ENCODE measurements at regions of chr5 and their contacts with region 1.

Region 1: GRCh38 chr5:149268928-149269557 is 2.6 kb upstream of the AFAP1L1 start:
- DNase-seq: no peak
- ATAC-seq: 0 out of 2 replicates have a peak, but pooled peaks have one; percentile 4
- H3K4me3 Mint-ChIP-seq: no peak overlapping the region
- H3K27ac Mint-ChIP-seq: no peak overlapping the region
- H3K4me1 Mint-ChIP-seq: peaks cover 33% of the 10 kb centered on the region
- H3K27me3 Mint-ChIP-seq: peaks cover 51% of the 10 kb centered on the region
- CTCF ChIP-seq: peak; percentile 85

Region 2: DNA sequence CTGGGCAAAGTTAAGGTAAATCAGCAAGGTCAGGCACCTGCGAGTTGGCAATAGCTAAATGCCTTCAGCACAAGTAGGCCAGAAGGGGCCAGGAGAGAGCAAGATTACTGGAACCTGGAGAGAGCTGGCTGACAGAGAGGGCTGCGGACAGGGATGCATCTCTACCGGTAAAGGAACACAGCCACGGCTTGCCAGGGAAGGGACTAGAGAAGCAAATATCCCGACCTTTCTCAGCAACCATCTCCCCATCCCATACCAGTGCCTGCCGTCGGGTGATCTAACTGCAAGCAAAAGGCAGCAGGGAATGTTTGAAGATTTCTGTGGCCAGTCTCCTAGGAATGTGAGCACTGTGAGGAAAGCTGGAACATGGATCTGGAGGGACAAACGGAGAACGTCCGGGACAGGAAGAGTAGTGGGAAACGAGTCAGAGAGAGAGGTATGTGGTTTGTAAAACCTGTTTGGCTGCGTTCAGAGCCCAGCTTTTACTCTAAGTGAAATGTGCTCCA is 143.6 kb before region 1 on chr5:
- CTCF ChIA-PET with region 1: interaction called, 27 read pairs
- POLR2A ChIA-PET with region 1: no interaction called
- DNase-seq: peak; percentile 65
- ATAC-seq: peak; percentile 95
- H3K4me3 Mint-ChIP-seq: no peak overlapping the region
- H3K27ac Mint-ChIP-seq: no peak overlapping the region
- H3K4me1 Mint-ChIP-seq: peaks cover 23% of the 10 kb centered on the region
- H3K27me3 Mint-ChIP-seq: no peaks in the 10 kb centered on the region
- CTCF ChIP-seq: no peak

Region 3: DNA sequence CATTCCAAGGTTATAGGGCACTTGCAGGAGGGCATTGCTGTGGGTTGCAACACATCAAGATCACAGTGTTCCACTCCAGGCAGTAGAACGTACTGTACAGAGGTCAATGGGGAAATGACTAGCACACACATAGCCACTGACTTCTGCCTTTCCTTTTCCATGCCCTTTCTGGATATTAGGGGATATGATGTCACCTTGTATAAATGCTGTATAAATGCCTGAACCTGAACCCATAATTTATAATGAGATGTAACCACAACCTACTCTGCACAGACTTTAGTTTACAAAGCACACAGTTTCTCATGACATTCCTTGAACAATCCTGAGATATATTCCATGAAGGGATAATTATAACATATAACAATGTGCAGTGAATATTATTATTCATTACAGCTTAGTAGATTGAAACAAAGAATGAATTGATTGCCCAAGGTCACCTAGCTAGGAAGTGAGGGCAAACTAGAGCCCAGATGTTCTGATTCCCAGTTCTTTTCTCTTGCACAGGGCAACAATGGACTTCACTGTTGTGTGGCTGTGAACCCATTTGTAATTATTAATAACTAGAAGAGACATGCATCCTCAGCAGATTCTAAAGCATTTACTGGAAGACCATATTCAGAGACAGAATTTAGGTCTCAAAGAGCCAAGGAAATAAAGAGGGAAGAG is 133.4 kb before region 1 on chr5:
- CTCF ChIA-PET with region 1: interaction called, 28 read pairs
- POLR2A ChIA-PET with region 1: no interaction called
- DNase-seq: no peak
- ATAC-seq: no peak
- H3K4me3 Mint-ChIP-seq: no peak overlapping the region
- H3K27ac Mint-ChIP-seq: no peak overlapping the region
- H3K4me1 Mint-ChIP-seq: peaks cover 3% of the 10 kb centered on the region
- H3K27me3 Mint-ChIP-seq: peaks cover 8% of the 10 kb centered on the region
- CTCF ChIP-seq: no peak

Region 4: DNA sequence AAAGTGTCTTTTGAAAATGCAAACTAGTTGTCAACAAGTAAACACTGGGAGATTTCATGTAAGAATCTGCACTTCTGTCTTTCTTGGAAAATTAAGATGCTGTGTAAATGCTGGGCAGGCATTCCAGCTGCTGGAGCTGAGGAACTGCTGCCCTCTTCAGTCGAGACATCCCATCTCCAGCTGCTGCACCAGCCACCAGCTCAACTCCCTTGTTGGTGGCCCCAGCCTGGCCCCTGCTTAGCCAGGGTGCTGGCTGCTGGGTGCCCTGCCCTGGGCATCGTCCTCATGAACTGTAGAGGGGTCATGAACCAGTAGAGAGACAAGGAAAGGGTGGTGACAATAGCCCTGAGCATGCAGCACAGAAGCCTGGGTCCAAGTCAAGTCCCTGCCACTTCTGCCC is 30.5 kb before region 1 on chr5:
- CTCF ChIA-PET with region 1: interaction called, 16 read pairs
- POLR2A ChIA-PET with region 1: no interaction called
- DNase-seq: no peak
- ATAC-seq: no peak; the same call in 1 of the 2 replicates
- H3K4me3 Mint-ChIP-seq: no peak overlapping the region
- H3K27ac Mint-ChIP-seq: no peak overlapping the region
- H3K4me1 Mint-ChIP-seq: peaks cover 3% of the 10 kb centered on the region; the same call in 1 of the 2 replicates
- H3K27me3 Mint-ChIP-seq: peaks cover 4% of the 10 kb centered on the region
- CTCF ChIP-seq: no peak

Region 5: DNA sequence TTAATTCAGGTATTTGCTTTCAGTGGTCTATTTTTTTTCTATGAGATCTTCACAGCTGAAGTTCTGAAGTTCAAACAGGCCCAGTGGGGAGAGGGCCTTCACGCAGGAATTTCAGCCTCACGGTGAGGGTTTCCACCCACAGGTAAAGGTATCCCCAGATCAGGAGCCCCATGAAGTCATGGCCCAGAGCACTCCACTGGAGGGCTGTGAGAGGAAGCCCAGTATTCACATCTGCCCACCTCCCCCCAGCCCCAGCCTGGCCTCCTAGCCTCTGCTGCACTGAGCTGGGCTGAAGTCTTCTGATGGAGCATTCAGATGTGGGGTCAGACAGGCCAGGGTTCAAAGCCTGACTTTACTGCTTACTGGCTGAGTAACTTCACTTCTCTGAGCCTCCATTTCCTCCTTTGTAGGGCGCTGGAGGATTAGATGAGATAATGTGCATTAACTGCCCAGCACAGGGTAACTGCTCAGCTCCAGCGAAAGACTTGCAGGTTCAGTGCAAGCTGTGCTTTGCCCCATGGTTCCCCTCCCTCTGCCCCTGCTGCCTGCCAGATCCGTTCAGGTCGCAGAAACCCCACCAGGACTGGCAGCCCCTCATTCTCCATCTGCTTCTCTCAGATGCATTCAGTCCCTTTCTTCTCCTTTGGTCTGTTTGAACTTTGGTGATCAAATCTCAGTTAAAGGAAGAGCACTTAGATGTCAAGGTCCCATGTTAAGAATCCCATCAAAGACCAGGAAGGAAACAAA is 25.7 kb after region 1 on chr5:
- CTCF ChIA-PET with region 1: interaction called, 12 read pairs
- POLR2A ChIA-PET with region 1: no interaction called
- DNase-seq: no peak
- ATAC-seq: peak; percentile 68
- H3K4me3 Mint-ChIP-seq: peak overlapping the region; percentile 7; the same call in 1 of the 2 replicates
- H3K27ac Mint-ChIP-seq: peak overlapping the region; percentile 73
- H3K4me1 Mint-ChIP-seq: peaks cover 34% of the 10 kb centered on the region
- H3K27me3 Mint-ChIP-seq: no peaks in the 10 kb centered on the region
- CTCF ChIP-seq: no peak